Activated naive CD4-positive, alpha-beta T cell treated with anti-CD3 and anti-CD28 coated beads for 36 hours (primary cell): ENCODE measurements at regions of chr10 and their contacts with region 1.

Region 1: GRCh38 chr10:89086801-89087521 is 96.4 kb downstream of the FAS start:
- DNase-seq: peak; percentile 20
- H3K4me3 Mint-ChIP-seq: no peak overlapping the region
- H3K27ac Mint-ChIP-seq: no peak overlapping the region
- H3K4me1 Mint-ChIP-seq: peaks cover 5% of the 10 kb centered on the region
- H3K27me3 Mint-ChIP-seq: no peaks in the 10 kb centered on the region

Region 2: GRCh38 chr10:88670497-88670896 is 416.5 kb before region 1 on chr10:
- CTCF ChIA-PET with region 1: no interaction called
- intact Hi-C with region 1: loop called (anchors 1 kb)
- DNase-seq: peak; percentile 44
- H3K4me3 Mint-ChIP-seq: no peak overlapping the region
- H3K27ac Mint-ChIP-seq: peak overlapping the region; percentile 33
- H3K4me1 Mint-ChIP-seq: peaks cover 24% of the 10 kb centered on the region
- H3K27me3 Mint-ChIP-seq: peaks cover 7% of the 10 kb centered on the region

Region 3: GRCh38 chr10:88828310-88828709 is 258.7 kb before region 1 on chr10:
- CTCF ChIA-PET with region 1: no interaction called
- intact Hi-C with region 1: loop called (anchors 2 kb)
- DNase-seq: no peak
- H3K4me3 Mint-ChIP-seq: no peak overlapping the region
- H3K27ac Mint-ChIP-seq: no peak overlapping the region
- H3K4me1 Mint-ChIP-seq: peaks cover 47% of the 10 kb centered on the region
- H3K27me3 Mint-ChIP-seq: no peaks in the 10 kb centered on the region

Region 4: GRCh38 chr10:89001024-89001728 is 85.8 kb before region 1 on chr10:
- CTCF ChIA-PET with region 1: interaction called, 4 read pairs
- intact Hi-C with region 1: loop called (anchors 1 kb)
- DNase-seq: peak; percentile 73
- H3K4me3 Mint-ChIP-seq: peak overlapping the region; percentile 53
- H3K27ac Mint-ChIP-seq: peak overlapping the region; percentile 83
- H3K4me1 Mint-ChIP-seq: peaks cover 54% of the 10 kb centered on the region
- H3K27me3 Mint-ChIP-seq: no peaks in the 10 kb centered on the region

Region 5: DNA sequence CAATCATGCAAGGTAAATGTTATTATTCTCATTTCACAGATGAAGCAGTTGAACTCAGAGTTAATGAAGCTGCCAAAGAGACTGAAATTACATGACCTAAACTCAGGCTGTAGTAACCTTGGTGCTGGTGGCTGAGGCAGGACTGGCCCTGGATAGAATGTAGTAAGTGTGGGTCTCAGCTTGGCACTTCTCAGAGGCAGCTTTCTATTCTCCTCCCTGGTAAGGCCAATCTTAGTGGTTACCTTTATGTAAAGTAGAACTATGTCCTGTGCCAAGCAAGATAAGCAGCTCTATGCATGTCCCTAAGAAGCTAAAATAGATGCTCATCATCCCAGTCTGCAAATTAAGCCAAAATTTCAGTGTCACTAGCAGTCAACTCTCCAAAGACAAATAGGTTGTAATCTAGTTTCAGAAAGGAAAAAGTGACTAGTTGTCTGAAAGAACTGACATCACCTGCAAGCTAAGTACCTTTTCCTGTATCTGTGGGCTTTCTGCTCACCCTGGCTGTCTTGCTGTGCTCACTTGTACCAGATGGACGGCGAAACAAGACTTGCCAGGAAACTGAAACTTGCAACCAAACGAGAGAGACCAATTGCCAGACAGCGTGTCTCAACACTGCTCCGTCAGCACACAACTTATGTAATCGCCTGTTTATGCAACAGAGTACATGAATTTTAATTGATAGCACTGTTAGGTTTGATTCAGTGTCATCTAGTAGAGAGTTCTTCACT is 76.5 kb after region 1 on chr10:
- CTCF ChIA-PET with region 1: no interaction called
- intact Hi-C with region 1: loop called (anchors 1 kb)
- DNase-seq: peak; percentile 69
- H3K4me3 Mint-ChIP-seq: peak overlapping the region; percentile 33
- H3K27ac Mint-ChIP-seq: peak overlapping the region; percentile 5
- H3K4me1 Mint-ChIP-seq: peaks cover 36% of the 10 kb centered on the region
- H3K27me3 Mint-ChIP-seq: peaks cover 7% of the 10 kb centered on the region

Region 6: GRCh38 chr10:89251409-89252224 is 164.7 kb after region 1 on chr10 and contains the start of gene LIPA:
- CTCF ChIA-PET with region 1: no interaction called
- intact Hi-C with region 1: loop called (anchors 1 kb)
- DNase-seq: peak; percentile 95
- H3K4me3 Mint-ChIP-seq: peak within 1 kb of the TSS; percentile 84
- H3K27ac Mint-ChIP-seq: no peak within 1 kb of the TSS
- H3K4me1 Mint-ChIP-seq: peaks cover 38% of the 10 kb centered on the region
- H3K27me3 Mint-ChIP-seq: no peaks in the 10 kb centered on the region
- total RNA-seq, gene LIPA: 16.1 to 17.2 TPM

Region 7: DNA sequence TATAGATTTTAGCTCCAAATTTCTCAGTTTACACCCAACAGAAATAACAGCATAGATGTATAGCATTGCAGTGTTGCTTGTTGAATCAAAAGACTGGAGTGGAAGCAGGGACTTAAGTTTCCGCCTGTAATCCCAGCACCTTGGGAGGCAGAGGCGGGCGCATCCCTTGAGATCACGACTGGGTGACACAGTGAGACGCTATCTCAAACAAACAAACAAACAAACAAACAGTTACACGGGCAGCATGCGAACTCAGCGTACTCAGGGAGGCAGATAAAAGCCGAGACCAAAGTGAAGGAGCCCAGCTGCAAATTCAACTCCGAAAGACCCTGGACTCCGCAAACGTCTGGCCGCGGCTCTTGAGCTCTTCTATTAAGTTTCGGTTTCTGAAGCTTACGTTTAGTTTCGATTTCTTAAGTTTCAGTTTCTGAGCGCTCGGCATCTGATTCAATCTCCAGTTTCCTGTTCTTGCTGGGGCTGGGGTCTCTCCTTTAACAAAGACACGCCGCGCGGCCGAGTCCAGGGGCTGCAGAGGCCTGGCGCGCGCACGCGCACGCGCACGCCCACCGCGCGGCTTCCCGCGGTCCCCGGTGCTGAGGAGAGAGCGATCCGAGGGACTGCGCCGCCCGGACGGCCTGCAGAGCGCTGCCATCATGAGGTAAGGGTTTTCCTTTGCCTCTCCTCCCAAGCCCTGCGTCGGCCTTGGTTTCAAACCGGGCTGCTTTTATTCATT is 327.4 kb after region 1 on chr10 and contains the start of gene IFIT5:
- CTCF ChIA-PET with region 1: no interaction called
- intact Hi-C with region 1: loop called (anchors 1 kb)
- DNase-seq: peak; percentile 64
- H3K4me3 Mint-ChIP-seq: peak within 1 kb of the TSS; percentile 85
- H3K27ac Mint-ChIP-seq: peak within 1 kb of the TSS; percentile 96
- H3K4me1 Mint-ChIP-seq: peaks cover 45% of the 10 kb centered on the region
- H3K27me3 Mint-ChIP-seq: no peaks in the 10 kb centered on the region
- total RNA-seq, gene IFIT5: 7.0 to 7.2 TPM